ENCODE measurements at regions of chr2 and their contacts with region 1.

Region 1: DNA sequence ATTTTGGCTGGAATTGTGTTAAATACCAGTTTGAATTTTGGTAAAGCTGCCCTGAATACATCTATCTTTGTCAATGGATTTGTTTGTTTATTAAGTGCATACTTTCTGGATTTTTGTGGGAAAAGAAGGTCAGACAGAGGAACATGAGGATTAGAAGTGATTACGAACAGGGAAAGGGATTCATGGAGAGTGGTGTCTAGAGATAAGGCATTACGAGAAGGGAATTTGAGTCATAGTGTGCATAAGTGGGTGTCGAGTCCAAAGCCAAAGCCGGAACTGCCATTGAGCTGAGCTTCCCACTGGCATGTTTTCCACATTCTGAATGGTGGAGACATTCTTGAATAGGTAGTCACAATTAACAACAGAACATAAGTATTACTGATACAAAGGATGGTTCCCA is 68.9 kb upstream of the EFEMP1 start:
- DNase-seq: peak; percentile 100
- H3K4me3 ChIP-seq: no peak overlapping the region
- H3K27ac ChIP-seq: peak overlapping the region; percentile 97
- H3K4me1 ChIP-seq: peaks cover 62% of the 10 kb centered on the region
- H3K27me3 ChIP-seq: no peaks in the 10 kb centered on the region
- CTCF ChIP-seq: no peak
- POLR2A ChIP-seq: peak; percentile 70

Region 2: GRCh38 chr2:55779459-55780421 is 212.7 kb before region 1 on chr2:
- CTCF ChIA-PET with region 1: no interaction called
- POLR2A ChIA-PET with region 1: no interaction called
- dilution Hi-C with region 1: no loop called
- intact Hi-C with region 1: loop called (anchors 1 kb)
- DNase-seq: peak; percentile 93
- H3K4me3 ChIP-seq: no peak overlapping the region
- H3K27ac ChIP-seq: peak overlapping the region; percentile 99
- H3K4me1 ChIP-seq: peaks cover 28% of the 10 kb centered on the region
- H3K27me3 ChIP-seq: no peaks in the 10 kb centered on the region
- CTCF ChIP-seq: no peak
- POLR2A ChIP-seq: peak; percentile 19

Region 3: GRCh38 chr2:55843096-55843993 is 149.1 kb before region 1 on chr2:
- CTCF ChIA-PET with region 1: no interaction called
- POLR2A ChIA-PET with region 1: no interaction called
- dilution Hi-C with region 1: no loop called
- intact Hi-C with region 1: no loop called
- DNase-seq: peak; percentile 81
- H3K4me3 ChIP-seq: no peak overlapping the region
- H3K27ac ChIP-seq: no peak overlapping the region
- H3K4me1 ChIP-seq: no peaks in the 10 kb centered on the region
- H3K27me3 ChIP-seq: no peaks in the 10 kb centered on the region
- CTCF ChIP-seq: no peak
- POLR2A ChIP-seq: no peak

Region 4: GRCh38 chr2:55885129-55885943 is 107.1 kb before region 1 on chr2:
- CTCF ChIA-PET with region 1: no interaction called
- POLR2A ChIA-PET with region 1: no interaction called
- dilution Hi-C with region 1: loop called (anchors 25 kb)
- intact Hi-C with region 1: loop called (anchors 1 kb)
- DNase-seq: peak; percentile 95
- H3K4me3 ChIP-seq: no peak overlapping the region
- H3K27ac ChIP-seq: peak overlapping the region; percentile 97
- H3K4me1 ChIP-seq: peaks cover 96% of the 10 kb centered on the region
- H3K27me3 ChIP-seq: no peaks in the 10 kb centered on the region
- CTCF ChIP-seq: no peak
- POLR2A ChIP-seq: peak; percentile 88

Region 5: GRCh38 chr2:55954306-55955035 is 38.0 kb before region 1 on chr2:
- CTCF ChIA-PET with region 1: no interaction called
- POLR2A ChIA-PET with region 1: no interaction called
- dilution Hi-C with region 1: no loop called
- intact Hi-C with region 1: no loop called
- DNase-seq: peak; percentile 63
- H3K4me3 ChIP-seq: no peak overlapping the region
- H3K27ac ChIP-seq: no peak overlapping the region
- H3K4me1 ChIP-seq: no peaks in the 10 kb centered on the region
- H3K27me3 ChIP-seq: no peaks in the 10 kb centered on the region
- CTCF ChIP-seq: no peak
- POLR2A ChIP-seq: no peak

Region 6: GRCh38 chr2:55966401-55967118 is 25.9 kb before region 1 on chr2:
- CTCF ChIA-PET with region 1: interaction called, 38 read pairs
- POLR2A ChIA-PET with region 1: interaction called, 40 read pairs
- dilution Hi-C with region 1: no loop called
- intact Hi-C with region 1: loop called (anchors 1 kb)
- DNase-seq: peak; percentile 97
- H3K4me3 ChIP-seq: no peak overlapping the region
- H3K27ac ChIP-seq: peak overlapping the region; percentile 97
- H3K4me1 ChIP-seq: peaks cover 50% of the 10 kb centered on the region
- H3K27me3 ChIP-seq: no peaks in the 10 kb centered on the region
- CTCF ChIP-seq: peak; percentile 7
- POLR2A ChIP-seq: peak; percentile 48